ENCODE measurements at regions of chr3 and their contacts with region 1.

Region 1: DNA sequence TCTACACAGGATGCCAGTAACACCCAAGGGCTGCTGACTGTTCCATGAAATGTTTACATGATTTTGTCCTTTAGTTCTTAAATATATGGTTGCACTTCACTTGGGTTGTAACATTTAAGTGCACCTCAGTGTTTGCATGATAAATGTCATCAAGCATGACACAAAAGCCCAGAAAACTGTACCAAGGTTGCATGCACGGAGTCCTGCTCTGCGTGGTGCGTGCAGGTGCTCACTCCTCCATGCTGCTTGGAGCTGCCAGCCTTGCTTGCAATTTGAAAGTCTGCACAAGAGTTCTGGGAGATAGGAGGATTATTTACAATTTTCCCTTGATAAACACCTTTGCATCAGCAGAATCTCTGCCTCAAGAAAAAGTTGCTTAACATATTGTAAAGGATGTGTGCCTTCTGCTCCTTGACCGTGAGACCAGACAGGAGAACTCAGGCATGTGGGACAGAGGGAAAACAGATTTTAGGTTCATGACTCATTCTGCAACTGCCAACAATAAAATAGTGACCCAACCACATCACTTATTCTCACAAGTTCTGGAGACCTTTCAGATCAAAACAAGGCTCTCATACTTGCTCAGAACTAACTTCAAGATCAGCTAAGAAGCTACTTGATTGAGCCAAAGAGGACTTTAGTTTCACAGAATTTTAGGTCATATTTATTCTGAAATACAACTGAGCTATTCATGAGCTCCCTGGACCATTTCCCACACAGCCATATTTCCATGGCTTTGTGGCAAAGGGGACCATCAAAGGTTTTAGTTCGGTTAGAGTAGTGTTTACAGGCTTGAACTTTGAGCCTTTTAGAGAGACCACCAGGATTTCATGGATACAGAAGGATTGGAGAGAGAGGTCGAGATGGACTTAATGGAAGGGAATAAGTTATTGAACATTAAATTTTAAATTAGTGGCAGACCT is 128.4 kb upstream of the ZBED2 start:
- DNase-seq: peak; percentile 74
- H3K4me3 ChIP-seq: no peak overlapping the region
- H3K27ac ChIP-seq: peak overlapping the region; percentile 36
- H3K27me3 ChIP-seq: no peaks in the 10 kb centered on the region
- CTCF ChIP-seq: no peak

Region 2: DNA sequence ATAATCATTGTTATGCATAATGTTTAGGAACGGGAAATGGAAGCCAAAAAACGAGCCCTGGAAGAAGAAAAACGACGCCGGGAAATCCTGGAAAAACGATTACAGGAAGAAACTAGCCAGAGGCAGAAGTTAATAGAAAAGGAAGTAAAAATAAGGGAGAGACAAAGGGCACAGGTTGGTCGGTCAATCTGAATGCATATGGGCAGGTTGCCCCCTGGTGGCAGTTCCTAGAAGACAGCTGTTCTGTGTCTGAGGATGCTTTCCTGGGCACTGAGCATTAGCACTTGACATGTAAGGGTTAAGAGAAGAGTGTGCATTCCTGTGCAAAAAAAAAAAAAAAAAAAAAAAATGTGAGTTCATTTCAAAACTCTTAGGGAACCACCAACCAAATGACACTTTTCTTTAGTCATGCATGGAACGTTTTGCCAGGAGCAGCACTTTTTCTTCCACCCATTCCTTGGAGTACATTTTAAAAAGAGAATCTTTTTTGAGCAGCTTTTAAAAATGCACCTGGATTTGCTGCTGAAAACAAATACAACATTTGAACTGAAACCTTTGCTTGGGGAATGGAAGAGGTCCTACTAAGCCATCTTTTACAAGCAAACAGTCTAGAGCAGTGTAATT is 244.2 kb after region 1 on chr3:
- in situ Hi-C with region 1: loop called (anchors 10 kb)
- DNase-seq: peak; percentile 84
- H3K4me3 ChIP-seq: no peak overlapping the region
- H3K27ac ChIP-seq: no peak overlapping the region
- H3K27me3 ChIP-seq: no peaks in the 10 kb centered on the region
- CTCF ChIP-seq: peak; percentile 91